ENCODE measurements at regions of chr20 and their contacts with region 1.

Region 1: GRCh38 chr20:33686100-33686983 is at the start of gene E2F1:
- DNase-seq: peak; percentile 87 to 97 (median 93)
- ATAC-seq: peak; percentile 89
- H3K4me3 ChIP-seq: peak within 1 kb of the TSS; percentile 39
- H3K4me3 Mint-ChIP-seq: peak within 1 kb of the TSS; percentile 81
- H3K27ac ChIP-seq: peak within 1 kb of the TSS; percentile 15 to 49
- H3K27ac Mint-ChIP-seq: peak within 1 kb of the TSS; percentile 79
- H3K4me1 ChIP-seq: peaks cover 35% of the 10 kb centered on the region
- H3K4me1 Mint-ChIP-seq: peaks cover 37% of the 10 kb centered on the region
- H3K27me3 ChIP-seq: no peaks in the 10 kb centered on the region
- H3K27me3 Mint-ChIP-seq: no peaks in the 10 kb centered on the region
- CTCF ChIP-seq: no peak
- total RNA-seq, gene E2F1: 1.2 to 1.3 TPM

Region 2: DNA sequence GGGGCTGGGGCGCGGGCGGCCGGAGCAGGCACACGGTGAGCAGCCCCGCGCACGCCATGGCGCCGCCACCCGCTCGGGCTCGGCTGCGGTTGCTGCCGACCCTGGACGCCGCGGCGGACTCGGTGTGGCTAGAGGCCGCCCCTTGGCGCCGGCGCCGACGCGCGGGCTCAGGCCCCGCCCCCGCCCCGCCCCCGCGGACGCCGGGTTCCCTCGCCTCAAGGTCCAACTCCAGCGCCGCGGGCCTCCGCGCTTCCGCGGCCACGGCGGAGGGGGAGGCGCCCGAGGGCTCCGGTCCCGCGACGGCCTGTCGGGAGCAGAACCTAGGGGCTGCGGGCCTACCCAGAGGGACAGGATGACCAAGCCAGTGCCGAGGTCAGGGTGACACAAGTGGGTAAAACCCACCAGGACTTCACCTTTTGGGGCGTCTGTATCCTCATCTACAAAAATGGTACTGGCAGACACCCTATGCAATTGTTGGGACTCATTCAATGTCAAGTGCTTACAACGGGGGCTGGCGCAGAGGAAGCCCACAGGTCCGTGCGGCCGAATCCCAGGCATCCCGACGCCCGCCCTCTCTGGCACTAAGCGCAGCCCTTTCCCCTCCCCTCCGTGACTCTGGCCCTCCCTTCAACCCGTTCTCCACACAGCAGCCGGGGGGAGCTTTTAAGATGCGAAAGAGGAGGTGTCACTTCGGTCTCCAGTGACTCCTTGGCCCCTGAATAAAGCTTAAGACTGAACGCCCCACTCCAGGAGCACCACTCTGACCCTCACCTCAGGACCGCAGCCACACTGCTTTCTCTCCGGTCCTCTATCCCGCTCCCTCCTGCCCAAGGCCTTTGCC is 11.8 kb before region 1 on chr20 and contains the start of gene NECAB3:
- CTCF ChIA-PET with region 1: interaction called, 57 read pairs
- POLR2A ChIA-PET with region 1: interaction called, 9 read pairs
- intact Hi-C with region 1: loop called in 1 of 2 experiments (anchors 1 kb)
- DNase-seq: peak in 7 of 9 experiments; percentile 42 to 74 (median 60)
- ATAC-seq: peak; percentile 76
- H3K4me3 ChIP-seq: peak within 1 kb of the TSS; percentile 45 to 59
- H3K4me3 Mint-ChIP-seq: peak within 1 kb of the TSS; percentile 84
- H3K27ac ChIP-seq: no peak within 1 kb of the TSS
- H3K27ac Mint-ChIP-seq: peak within 1 kb of the TSS; percentile 77
- H3K4me1 ChIP-seq: peaks cover 31% of the 10 kb centered on the region
- H3K4me1 Mint-ChIP-seq: peaks cover 30% of the 10 kb centered on the region
- H3K27me3 ChIP-seq: no peaks in the 10 kb centered on the region
- H3K27me3 Mint-ChIP-seq: no peaks in the 10 kb centered on the region
- CTCF ChIP-seq: no peak
- total RNA-seq, gene NECAB3: 5.7 to 5.9 TPM

Region 3: DNA sequence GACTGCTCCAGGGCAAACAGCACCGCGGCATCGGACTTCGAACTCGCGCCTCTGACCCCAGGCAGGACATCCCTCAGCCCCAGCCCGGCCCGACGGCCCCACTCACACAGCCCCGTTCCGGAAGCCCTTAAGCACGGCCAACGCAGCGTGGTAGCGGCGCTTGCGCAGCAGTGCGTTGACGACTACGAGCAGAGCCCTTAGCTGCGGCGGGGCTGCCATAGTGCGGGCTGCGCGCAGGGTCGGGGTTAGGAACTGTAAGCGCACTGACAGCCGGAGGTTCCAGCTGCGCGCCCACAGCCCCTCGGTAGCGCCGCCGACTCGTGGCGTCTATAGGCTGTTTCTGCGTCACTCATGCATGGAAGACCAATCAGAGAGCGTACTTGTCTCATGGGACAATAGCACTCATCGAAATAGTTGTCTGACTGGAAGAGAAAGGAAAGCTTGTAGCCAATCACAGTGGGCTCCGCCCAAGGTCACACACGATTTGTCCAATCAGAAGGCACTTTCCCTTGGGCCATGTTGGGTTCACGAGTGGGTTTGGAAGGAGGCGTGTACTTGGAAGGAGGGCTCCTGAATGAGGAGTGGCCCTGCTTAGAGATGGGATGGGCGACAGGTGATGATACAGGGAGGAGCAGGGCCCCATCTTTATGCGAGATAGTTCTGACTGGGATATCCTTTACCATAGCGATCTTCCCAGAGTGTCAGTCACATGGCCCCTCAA is 33.8 kb after region 1 on chr20 and contains the start of gene PXMP4:
- CTCF ChIA-PET with region 1: interaction called, 5 read pairs
- POLR2A ChIA-PET with region 1: interaction called, 10 read pairs
- intact Hi-C with region 1: loop called (anchors 1 kb)
- DNase-seq: peak; percentile 71 to 97 (median 84)
- ATAC-seq: peak; percentile 94
- H3K4me3 ChIP-seq: peak within 1 kb of the TSS; percentile 72 to 95
- H3K4me3 Mint-ChIP-seq: peak within 1 kb of the TSS; percentile 86
- H3K27ac ChIP-seq: peak within 1 kb of the TSS; percentile 68 to 78
- H3K27ac Mint-ChIP-seq: peak within 1 kb of the TSS; percentile 91
- H3K4me1 ChIP-seq: peaks cover 16% of the 10 kb centered on the region
- H3K4me1 Mint-ChIP-seq: peaks cover 29% of the 10 kb centered on the region
- H3K27me3 ChIP-seq: no peaks in the 10 kb centered on the region
- H3K27me3 Mint-ChIP-seq: no peaks in the 10 kb centered on the region
- CTCF ChIP-seq: no peak
- total RNA-seq, gene PXMP4: 2.7 to 2.8 TPM

Measured in CD8-positive, alpha-beta T cell (primary cell).